ENCODE measurements at regions of chr20 and their contacts with region 1.

Region 1: DNA sequence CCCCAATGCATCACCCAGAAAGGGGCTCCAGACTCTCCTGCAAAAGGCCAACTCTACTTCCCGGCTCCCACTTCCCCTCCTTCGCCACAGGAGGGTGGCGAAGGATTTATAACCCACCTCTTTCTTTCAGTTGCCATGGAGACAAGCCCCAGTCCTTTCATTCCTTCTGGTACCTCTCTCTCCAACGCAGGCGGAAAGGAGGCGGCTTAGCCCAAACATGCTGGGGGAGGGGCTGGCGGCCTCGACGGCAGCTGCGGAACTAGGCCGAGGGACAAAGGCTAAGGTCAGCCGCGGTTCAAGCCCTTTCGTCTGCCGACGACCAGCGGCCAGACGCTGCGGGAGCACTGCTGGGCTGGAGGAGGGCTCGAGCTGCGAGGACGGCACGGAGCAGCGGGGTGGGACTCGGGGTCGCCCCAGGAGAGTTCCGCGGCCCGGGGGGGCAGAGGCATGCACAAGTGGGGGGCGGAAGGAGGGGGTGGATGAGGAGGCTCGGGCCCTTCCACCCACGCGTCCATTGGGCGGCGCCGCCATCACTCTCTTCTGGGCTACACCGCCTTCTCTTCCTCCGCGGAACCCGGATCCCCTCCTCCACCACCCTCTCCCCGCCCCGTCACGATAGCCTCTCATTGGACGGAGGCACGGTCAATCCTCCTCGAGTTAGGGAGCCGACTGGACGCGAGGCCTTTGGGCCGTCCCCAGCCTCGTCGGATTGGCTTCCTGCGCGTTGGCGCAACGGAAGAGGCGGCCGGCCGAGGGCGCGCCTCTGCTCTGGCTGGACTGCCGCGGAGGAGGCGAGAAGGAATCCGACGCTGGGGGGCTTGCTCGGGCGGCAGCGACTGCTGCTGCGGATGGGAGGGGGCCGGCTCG is at the start of gene PANK2:
- DNase-seq: peak; percentile 99
- CTCF ChIP-seq: no peak

Region 2: GRCh38 chr20:4006640-4007039 is 117.8 kb after region 1 on chr20:
- in situ Hi-C with region 1: no loop called
- DNase-seq: no peak
- CTCF ChIP-seq: no peak

Region 3: DNA sequence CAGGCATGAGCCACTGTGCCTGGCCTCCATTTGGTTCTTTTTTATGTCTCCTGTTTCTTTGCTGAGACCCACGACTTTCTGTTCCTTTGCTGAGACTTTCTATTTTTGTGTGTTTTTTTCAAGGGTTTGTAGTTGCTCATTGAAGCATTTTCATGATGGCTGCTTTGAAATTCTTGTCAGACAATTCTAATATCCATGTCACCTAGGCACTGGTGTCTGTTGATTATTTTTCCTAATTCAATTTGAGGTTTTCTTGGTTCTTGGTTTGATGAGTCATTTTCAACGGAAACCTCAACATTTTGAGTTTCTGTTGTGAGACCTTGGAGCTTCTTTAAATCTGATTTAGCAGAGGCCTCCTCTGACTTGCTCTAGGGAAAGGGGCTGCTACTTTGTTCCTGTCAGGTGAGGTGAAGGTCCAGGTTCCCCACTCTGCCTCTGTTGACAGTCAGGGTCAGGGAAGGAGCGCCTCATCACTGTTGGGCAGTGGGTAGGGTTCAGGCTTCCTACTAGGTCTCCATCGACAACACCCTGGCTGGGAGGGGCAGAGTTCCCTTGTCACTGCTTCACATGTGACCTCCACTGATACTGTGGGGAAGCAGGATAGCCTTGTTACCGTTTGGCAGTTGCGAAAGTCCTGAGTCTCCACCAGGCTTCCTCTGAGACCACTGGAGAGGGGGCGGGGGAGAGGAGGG is 193.7 kb after region 1 on chr20:
- in situ Hi-C with region 1: loop called (anchors 10 kb)
- DNase-seq: peak; percentile 46
- CTCF ChIP-seq: no peak